ENCODE measurements at regions of chr13 and their contacts with region 1.

Region 1: DNA sequence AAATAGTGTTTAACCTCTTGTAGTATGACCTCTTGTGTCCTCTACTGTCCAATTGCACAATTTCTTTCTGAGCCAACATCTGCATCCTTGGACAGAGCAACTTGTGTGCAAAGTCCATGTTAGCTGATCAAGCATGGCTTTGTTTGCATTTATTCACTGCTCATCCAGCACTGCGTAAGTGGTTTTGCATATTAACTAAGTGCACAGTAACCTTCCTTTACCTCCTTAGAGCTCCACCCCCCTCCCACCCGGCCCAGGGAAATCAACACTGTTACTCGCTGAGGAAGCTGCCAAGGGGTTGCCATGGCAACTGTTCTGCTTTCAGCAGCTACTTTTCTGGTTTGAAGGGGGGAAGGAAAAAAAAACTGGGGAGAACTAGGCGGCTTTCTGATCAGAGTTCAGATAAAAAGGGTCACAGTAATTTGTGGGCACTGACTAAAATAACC is 153.5 kb upstream of the KLF12 start:
- DNase-seq: peak; percentile 78
- H3K4me3 Mint-ChIP-seq: peak overlapping the region; percentile 50
- H3K27ac Mint-ChIP-seq: peak overlapping the region; percentile 67
- H3K4me1 Mint-ChIP-seq: peaks cover 44% of the 10 kb centered on the region
- H3K27me3 Mint-ChIP-seq: peaks cover 3% of the 10 kb centered on the region

Region 2: DNA sequence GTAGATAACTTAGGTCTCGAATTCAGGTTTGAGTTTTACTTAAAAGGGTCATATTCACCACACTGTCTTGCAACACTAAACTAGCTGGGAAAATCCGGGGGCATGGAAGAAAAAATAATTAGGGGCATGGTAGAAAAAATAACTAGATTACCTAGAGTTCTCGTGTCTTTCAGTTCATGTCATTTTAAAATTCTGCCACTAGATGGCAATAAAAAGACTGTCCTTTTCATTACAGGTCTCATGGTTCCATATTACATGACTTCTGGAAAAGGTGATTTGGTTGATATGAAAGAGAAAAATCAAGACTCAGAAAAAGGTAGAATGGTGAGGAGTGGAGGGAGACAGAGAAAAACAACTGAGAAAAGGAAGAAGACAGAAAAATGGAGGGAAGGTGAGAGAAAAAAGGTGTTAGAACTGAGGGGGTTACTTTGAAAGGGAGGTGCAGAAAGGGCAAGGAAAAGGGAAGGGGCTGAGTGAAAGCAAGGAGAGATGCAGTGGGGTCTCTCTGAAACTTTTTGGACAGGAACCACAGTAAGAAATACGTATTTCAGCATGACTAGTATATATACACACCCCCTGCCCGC is 452.5 kb before region 1 on chr13:
- CTCF ChIA-PET with region 1: interaction called, 28 read pairs
- POLR2A ChIA-PET with region 1: interaction called, 3 read pairs
- DNase-seq: no peak
- H3K4me3 Mint-ChIP-seq: no peak overlapping the region
- H3K27ac Mint-ChIP-seq: no peak overlapping the region
- H3K4me1 Mint-ChIP-seq: no peaks in the 10 kb centered on the region
- H3K27me3 Mint-ChIP-seq: no peaks in the 10 kb centered on the region

Region 3: DNA sequence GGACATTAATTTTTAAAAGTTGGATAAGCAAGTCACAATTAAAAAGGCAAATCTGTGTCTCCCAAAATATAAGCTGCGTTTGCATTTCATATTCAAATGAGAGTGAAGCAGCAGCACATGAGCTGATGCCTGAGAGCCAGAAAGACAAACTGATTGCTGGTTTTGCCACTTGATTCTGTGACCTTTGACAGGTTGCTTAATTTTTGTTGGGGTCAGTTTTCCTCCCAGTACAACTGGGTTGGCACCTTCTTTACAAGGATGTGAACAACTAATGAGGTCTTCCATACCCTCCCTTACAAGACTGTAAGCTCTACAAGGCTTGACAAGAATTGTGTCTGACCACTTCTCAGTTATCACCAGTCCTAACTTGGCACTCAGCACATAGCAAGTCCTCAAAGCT is 145.5 kb before region 1 on chr13:
- CTCF ChIA-PET with region 1: interaction called, 76 read pairs
- POLR2A ChIA-PET with region 1: interaction called, 127 read pairs
- DNase-seq: no peak
- H3K4me3 Mint-ChIP-seq: no peak overlapping the region
- H3K27ac Mint-ChIP-seq: no peak overlapping the region
- H3K4me1 Mint-ChIP-seq: peaks cover 2% of the 10 kb centered on the region
- H3K27me3 Mint-ChIP-seq: no peaks in the 10 kb centered on the region

Region 4: GRCh38 chr13:74306496-74306895 is 18.7 kb after region 1 on chr13:
- CTCF ChIA-PET with region 1: interaction called, 13 read pairs
- POLR2A ChIA-PET with region 1: interaction called, 3 read pairs
- DNase-seq: no peak
- H3K4me3 Mint-ChIP-seq: no peak overlapping the region
- H3K27ac Mint-ChIP-seq: no peak overlapping the region
- H3K4me1 Mint-ChIP-seq: no peaks in the 10 kb centered on the region
- H3K27me3 Mint-ChIP-seq: no peaks in the 10 kb centered on the region

Region 5: GRCh38 chr13:74325106-74325505 is 37.4 kb after region 1 on chr13:
- CTCF ChIA-PET with region 1: no interaction called
- POLR2A ChIA-PET with region 1: no interaction called
- DNase-seq: no peak
- H3K4me3 Mint-ChIP-seq: no peak overlapping the region
- H3K27ac Mint-ChIP-seq: no peak overlapping the region
- H3K4me1 Mint-ChIP-seq: no peaks in the 10 kb centered on the region
- H3K27me3 Mint-ChIP-seq: no peaks in the 10 kb centered on the region

Measured in activated CD4-positive, alpha-beta memory T cell treated with anti-CD3 and anti-CD28 coated beads, Interleukin-2, amount 10 ng/mL, durations not matched to agents 7 days and 5 days (primary cell).